HepG2 (cell line): ENCODE measurements at regions of chr11 and their contacts with region 1.

Region 1: DNA sequence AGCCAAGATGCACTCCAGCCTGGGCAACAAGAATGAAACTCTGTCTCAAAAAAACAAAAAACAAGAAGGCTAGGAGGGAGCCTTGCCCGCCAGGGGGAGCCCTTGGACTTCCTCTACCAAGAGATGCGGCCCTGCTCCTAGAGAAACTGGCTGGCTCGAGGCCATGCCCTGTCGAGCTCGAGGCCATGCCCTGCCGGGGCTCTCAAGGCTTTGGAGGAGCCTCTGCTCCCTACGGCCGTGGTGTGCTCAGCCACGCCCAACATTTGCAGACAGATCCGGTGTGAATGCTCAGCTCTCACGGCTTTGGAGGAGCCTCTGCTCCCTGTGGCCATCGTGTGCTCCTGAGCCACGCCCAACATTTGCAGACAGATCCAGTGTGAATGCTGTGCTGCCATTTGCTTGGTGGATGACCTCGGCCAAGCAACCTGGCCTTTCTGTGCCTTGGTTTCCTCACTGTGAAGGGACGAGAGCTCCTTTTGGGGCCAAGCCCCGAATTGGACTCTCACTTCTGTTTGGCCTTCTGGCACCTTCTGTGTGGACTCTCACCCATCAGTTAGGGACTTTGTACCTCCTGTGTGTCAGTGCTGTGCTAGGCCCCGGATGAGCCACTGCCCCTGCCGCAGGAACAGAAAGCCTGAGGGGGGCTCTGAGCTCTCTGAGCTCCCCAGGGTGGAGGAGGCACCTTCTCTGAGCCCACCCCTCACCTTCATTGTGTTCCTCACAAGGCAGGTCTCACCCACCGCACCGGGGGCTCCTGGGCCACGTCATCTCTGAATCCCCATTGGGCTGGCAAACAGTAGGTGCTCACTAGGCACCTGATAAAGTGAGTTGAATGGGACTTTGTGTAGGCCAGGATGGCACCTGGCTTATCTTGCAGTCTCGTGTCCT is 14.1 kb downstream of the C11orf24 start:
- DNase-seq: peak; percentile 83
- ATAC-seq: peak; percentile 76
- H3K4me3 ChIP-seq: peak overlapping the region in 1 of 3 experiments; percentile 17; a peak in 1 of 6 replicates
- H3K27ac ChIP-seq: no peak overlapping the region
- H3K4me1 ChIP-seq: peaks cover 33% of the 10 kb centered on the region
- H3K27me3 ChIP-seq: no peaks in the 10 kb centered on the region; a peak in 1 of 5 replicates
- CTCF ChIP-seq: peak; percentile 92
- EP300 ChIP-seq: no peak
- POLR2A ChIP-seq: 0 out of 4 replicates have a peak, but pooled peaks of 1 of the 2 experiments have one; percentile 16
- RAD21 ChIP-seq: peak; percentile 93

Region 2: DNA sequence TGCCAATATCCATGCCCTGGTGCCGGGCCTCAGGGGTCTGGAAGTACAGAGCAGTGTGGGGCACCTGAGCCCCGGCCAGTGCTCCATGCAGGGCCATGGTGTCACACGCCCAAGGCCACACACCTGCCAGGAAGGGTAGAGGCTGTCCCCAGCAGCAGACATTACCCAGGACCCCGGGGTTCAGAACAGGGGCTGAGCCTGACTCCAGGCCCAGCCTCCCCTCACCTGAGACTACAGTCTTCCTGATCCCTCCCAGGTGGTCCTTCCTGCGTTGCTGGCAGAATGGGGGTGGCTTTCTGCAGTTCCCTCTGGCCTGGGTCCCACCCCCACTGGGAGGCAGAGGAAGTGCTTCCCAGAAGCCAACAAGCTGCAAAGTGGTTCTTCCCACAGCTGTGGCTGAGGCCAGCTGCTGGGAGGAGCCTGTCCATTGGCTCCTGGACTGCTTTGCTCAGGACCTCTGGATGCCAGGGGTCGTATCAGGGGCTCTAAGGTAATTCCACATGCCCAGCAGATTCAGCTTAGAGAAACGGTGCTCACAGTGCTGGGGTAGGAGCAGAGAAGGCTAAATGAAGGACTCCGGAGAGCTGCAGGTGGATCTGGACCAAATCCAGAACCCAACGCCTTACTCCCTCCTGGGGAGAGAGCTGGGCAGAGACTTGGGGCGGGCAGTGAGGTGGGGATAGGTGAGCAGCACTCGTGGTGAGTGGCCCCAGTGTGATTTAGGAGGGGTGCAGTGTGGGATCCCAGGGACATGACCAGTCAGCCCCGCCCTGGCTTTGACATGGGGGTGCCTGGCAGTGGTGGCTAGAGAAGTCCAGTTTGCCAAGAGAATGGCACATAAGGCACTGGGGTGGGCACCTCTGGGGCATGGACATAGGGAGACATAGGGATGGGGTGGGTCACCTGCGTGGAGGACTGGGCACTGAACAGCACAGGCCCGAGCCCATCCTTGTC is 206.3 kb before region 1 on chr11:
- CTCF ChIA-PET with region 1: no interaction called
- POLR2A ChIA-PET with region 1: no interaction called
- in situ Hi-C with region 1: no loop called
- intact Hi-C with region 1: no loop called
- DNase-seq: no peak
- ATAC-seq: peak; percentile 17
- H3K4me3 ChIP-seq: no peak overlapping the region
- H3K27ac ChIP-seq: no peak overlapping the region
- H3K4me1 ChIP-seq: no peaks in the 10 kb centered on the region
- H3K27me3 ChIP-seq: no peaks in the 10 kb centered on the region
- CTCF ChIP-seq: no peak
- EP300 ChIP-seq: no peak
- POLR2A ChIP-seq: peak in 1 of 2 experiments; percentile 60; a peak in 2 of 4 replicates
- RAD21 ChIP-seq: no peak

Region 3: GRCh38 chr11:68213555-68214174 is 44.1 kb before region 1 on chr11:
- CTCF ChIA-PET with region 1: no interaction called
- POLR2A ChIA-PET with region 1: interaction called, 18 read pairs
- in situ Hi-C with region 1: no loop called
- intact Hi-C with region 1: loop called (anchors 2 kb)
- DNase-seq: peak; percentile 76
- ATAC-seq: peak; percentile 16
- H3K4me3 ChIP-seq: peak overlapping the region; percentile 63 to 74 (median 63)
- H3K27ac ChIP-seq: peak overlapping the region; percentile 98
- H3K4me1 ChIP-seq: peaks cover 67% of the 10 kb centered on the region
- H3K27me3 ChIP-seq: no peaks in the 10 kb centered on the region; a peak in 1 of 5 replicates
- CTCF ChIP-seq: peak; percentile 16; the same call in 1 of the 2 replicates
- EP300 ChIP-seq: no peak
- POLR2A ChIP-seq: peak; percentile 97
- RAD21 ChIP-seq: peak; percentile 76

Region 4: DNA sequence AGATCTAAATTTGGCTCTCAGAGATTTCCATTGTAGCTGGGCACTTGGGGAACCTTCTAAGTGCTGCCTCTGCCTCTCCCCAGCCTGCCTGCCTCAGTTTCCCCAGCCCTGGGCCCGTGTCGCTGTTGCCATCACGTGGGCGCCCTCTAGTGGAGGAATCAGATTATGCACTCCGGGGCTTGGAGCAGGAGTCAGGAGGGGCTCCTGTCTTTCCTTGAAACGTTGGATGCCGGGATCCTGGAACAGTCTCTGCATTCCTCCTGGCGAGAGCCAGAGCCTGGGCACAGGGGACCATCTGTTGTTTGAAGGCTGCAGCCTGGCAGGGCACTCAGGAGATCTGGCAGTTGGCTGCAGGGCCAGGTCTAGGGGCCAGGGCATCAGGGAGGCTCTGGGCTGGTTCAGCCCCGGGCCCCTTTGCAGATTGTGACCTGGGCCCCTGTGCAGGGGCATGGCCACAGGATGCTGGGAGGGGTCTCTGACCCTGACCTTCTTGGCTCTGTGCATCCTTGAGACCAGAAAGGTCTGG is 126.3 kb after region 1 on chr11:
- CTCF ChIA-PET with region 1: interaction called, 9 read pairs
- POLR2A ChIA-PET with region 1: interaction called, 3 read pairs
- in situ Hi-C with region 1: no loop called
- intact Hi-C with region 1: loop called (anchors 2 kb)
- DNase-seq: peak; percentile 43
- ATAC-seq: no peak
- H3K4me3 ChIP-seq: no peak overlapping the region
- H3K27ac ChIP-seq: no peak overlapping the region
- H3K4me1 ChIP-seq: peaks cover 46% of the 10 kb centered on the region
- H3K27me3 ChIP-seq: no peaks in the 10 kb centered on the region
- CTCF ChIP-seq: peak; percentile 89
- EP300 ChIP-seq: no peak
- POLR2A ChIP-seq: 0 out of 4 replicates have a peak, but pooled peaks of 1 of the 2 experiments have one; percentile 12
- RAD21 ChIP-seq: peak; percentile 91

Region 5: GRCh38 chr11:68447015-68447801 is 189.5 kb after region 1 on chr11:
- CTCF ChIA-PET with region 1: interaction called, 3 read pairs
- POLR2A ChIA-PET with region 1: no interaction called
- in situ Hi-C with region 1: loop called (anchors 5 kb)
- intact Hi-C with region 1: loop called (anchors 2 kb)
- DNase-seq: peak; percentile 59
- ATAC-seq: peak; percentile 91
- H3K4me3 ChIP-seq: no peak overlapping the region
- H3K27ac ChIP-seq: no peak overlapping the region
- H3K4me1 ChIP-seq: no peaks in the 10 kb centered on the region
- H3K27me3 ChIP-seq: no peaks in the 10 kb centered on the region
- CTCF ChIP-seq: peak; percentile 93
- EP300 ChIP-seq: no peak
- POLR2A ChIP-seq: no peak
- RAD21 ChIP-seq: peak; percentile 76